ENCODE measurements at regions of chr15 and their contacts with region 1.

Region 1: DNA sequence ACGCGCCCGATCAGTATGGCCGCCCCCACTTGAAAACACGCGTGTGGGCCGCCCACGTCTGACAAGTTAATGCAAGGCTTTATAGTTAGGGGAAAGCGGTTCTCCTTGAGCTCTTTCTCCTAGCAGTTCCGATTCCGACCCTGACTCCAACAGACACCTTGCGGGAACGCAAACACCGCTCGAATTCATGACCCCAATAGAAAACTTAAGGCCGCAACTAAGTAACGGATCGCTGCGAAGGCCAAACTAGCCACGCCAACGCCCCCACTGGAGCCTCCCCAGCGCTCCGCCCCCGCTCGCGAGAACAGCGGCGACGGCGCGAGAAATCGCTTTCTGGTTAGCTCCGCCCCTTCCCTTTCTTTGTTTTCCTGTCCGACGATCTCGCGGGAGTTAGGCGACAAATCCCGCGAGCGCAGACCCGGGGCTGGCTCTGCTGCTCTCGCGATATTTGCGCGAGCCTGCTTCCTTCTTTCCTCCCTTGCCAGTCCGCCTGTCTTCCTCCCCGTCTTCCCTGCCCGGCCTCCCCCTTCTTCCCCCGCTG is at the start of gene IREB2:
- DNase-seq: peak; percentile 97
- H3K4me3 ChIP-seq: peak within 1 kb of the TSS; percentile 87
- H3K27ac ChIP-seq: peak within 1 kb of the TSS; percentile 93
- H3K27me3 ChIP-seq: peaks cover 6% of the 10 kb centered on the region
- CTCF ChIP-seq: no peak
- polyA plus RNA-seq, gene IREB2: 21.5 and 30.4 TPM in 2 replicates

Region 2: GRCh38 chr15:78308422-78309032 is 129.3 kb before region 1 on chr15:
- CTCF ChIA-PET with region 1: interaction called, 13 read pairs
- POLR2A ChIA-PET with region 1: interaction called, 3 read pairs
- DNase-seq: peak; percentile 33
- H3K4me3 ChIP-seq: no peak overlapping the region
- H3K27ac ChIP-seq: no peak overlapping the region
- H3K27me3 ChIP-seq: peaks cover 7% of the 10 kb centered on the region
- CTCF ChIP-seq: peak; percentile 95

Region 3: DNA sequence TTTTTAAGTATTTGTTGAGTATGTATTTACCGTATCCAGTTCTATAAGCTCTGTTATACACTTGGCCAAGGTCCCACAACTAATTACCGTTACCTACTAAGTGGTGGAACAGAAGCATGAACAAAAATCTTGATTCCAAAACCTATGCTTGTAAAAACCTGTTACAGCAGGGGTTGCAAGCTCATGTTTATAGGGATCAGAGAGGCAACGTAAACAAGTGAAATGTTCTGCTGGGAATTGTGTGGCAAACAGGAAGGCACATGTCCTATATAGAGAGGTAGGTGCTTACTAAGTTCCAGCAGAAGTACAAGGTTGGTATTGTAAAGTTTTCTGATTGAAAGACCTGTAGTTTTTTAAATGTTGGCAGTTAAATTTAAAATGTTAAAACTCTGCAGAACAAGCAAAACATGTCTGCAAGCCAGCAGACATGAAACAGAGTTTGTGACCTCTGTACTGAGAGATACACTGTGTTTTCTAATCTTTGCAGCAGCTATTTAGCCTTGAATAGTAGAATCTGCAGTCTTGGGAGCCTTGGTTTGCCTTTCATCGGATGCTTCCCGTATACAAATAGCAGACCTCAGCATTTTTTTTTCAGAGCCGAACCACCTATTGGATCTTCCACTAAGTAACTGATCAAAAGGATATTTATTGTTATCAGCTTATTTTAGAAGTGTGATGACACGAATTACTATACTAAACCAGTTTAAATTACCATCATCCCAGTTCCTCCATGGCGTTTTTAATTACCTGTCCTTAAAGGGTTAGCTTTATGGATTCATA is 11.6 kb after region 1 on chr15:
- CTCF ChIA-PET with region 1: interaction called, 10 read pairs
- POLR2A ChIA-PET with region 1: interaction called, 6 read pairs
- DNase-seq: no peak
- H3K4me3 ChIP-seq: no peak overlapping the region
- H3K27ac ChIP-seq: no peak overlapping the region
- H3K27me3 ChIP-seq: no peaks in the 10 kb centered on the region
- CTCF ChIP-seq: no peak

Region 4: DNA sequence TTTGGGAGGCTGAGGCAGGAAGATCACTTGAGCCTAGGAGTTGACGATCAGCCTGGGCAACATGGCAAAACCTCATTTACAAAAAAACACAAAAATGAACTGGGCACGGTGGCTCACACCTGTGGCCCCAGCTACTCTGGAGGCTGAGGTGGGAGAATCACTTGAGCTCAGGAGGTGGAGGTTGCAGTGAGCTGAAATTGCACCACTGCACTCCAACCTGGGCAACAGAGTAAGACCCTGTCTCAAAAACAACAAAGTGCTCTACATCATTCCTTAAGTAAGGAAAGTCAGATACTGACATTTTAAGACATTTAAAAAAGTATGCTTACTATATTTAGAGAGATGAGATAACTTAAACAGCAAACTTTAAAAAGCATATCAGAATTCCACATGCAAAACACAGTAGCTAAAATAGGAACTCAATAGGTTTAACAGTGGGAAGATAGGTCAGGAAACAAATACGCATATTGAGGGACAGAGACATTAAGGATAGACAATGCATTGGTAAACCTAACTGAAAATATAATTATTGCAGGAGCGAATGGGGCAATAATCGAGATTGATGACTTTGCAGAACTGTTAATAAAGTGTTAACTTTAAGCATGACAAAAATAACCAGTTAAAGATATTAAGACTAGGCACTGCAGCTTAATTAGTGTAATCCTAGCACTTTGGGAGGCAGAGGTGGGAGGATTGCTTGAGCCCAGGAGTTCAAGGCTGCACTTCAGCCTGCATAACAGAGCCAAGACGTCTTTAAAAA is 466.9 kb after region 1 on chr15:
- CTCF ChIA-PET with region 1: interaction called, 10 read pairs
- POLR2A ChIA-PET with region 1: no interaction called
- DNase-seq: no peak
- H3K4me3 ChIP-seq: no peak overlapping the region
- H3K27ac ChIP-seq: no peak overlapping the region
- H3K27me3 ChIP-seq: no peaks in the 10 kb centered on the region
- CTCF ChIP-seq: no peak

Measured in AG04450 (cell line).